H1 (cell line): ENCODE measurements at regions of chr4 and their contacts with region 1.

Region 1: DNA sequence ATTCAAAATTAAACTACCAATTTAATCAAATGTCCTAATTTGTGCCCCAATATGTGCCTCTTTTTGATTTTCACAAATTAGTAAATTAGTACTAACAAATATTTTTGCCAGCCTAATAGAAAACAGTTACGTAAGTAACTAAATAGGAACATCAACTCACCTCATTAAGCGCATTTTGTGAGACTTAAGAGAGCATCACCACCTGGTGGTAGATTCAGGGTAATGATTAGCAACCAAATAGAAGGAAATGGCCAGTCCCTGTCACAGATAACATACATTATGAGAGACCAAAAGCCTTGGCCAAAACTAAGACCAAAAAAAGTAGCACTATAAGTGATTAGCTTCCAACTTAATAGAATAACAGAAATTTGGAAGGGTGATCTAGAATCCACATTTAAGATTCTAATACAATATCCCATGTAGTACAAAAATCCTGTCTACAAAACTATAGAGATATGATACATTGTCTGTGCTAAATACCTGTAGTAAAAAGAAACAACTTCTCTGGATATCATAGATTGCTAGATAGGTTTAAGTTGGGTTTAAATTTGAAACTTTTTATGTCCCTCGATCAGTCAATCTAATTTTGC is 46.7 kb downstream of the C4orf46 start:
- DNase-seq: no peak
- H3K4me3 ChIP-seq: no peak overlapping the region
- H3K27ac ChIP-seq: no peak overlapping the region
- H3K4me1 ChIP-seq: no peaks in the 10 kb centered on the region
- H3K27me3 ChIP-seq: no peaks in the 10 kb centered on the region
- CTCF ChIP-seq: peak in 2 of 3 experiments; percentile 73 to 81; a peak in 3 of 4 replicates
- EP300 ChIP-seq: no peak
- POLR2A ChIP-seq: no peak
- RAD21 ChIP-seq: peak; percentile 95 to 96

Region 2: DNA sequence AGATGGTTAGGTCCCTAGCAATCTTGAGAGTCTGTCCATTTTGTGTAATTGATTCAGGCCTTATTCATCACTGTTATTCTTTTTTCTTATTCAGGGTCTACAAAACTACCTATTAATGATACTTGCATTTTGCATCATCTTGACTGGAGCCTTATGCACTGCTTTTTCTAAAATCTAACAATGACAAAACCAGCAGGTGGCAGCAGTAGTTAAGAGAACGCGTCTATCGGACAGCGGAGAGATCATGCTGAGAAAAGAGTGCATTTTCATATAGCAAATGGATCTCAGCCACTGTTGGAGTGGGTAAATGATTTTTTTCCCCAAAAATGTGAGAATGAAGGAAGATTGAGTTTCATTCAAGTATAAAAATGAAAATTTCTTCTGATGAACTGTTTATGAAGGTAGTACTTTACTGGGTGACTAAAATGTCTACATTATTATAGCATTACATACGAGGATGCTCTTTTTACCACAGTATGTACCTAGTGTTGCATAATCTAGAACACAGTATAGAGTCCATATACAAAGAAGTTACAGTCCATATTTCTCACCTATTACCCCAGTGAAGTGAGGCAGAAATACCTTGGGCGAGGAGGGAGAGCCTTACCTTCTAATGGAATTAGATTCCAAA is 371.5 kb before region 1 on chr4:
- CTCF ChIA-PET with region 1: interaction called, 27 read pairs
- POLR2A ChIA-PET with region 1: no interaction called
- DNase-seq: no peak
- H3K4me3 ChIP-seq: no peak overlapping the region
- H3K27ac ChIP-seq: no peak overlapping the region
- H3K4me1 ChIP-seq: peaks cover 0 to 4% (median 2%) of the 10 kb centered on the region in 4 experiments; a peak in 2 of 7 replicates
- H3K27me3 ChIP-seq: no peaks in the 10 kb centered on the region
- CTCF ChIP-seq: peak in 2 of 3 experiments; percentile 57 to 62; a peak in 3 of 4 replicates
- EP300 ChIP-seq: no peak
- POLR2A ChIP-seq: no peak
- RAD21 ChIP-seq: peak; percentile 71 to 80

Region 3: GRCh38 chr4:158259955-158260575 is 364.9 kb before region 1 on chr4:
- CTCF ChIA-PET with region 1: interaction called, 27 read pairs
- POLR2A ChIA-PET with region 1: no interaction called
- DNase-seq: no peak
- H3K4me3 ChIP-seq: no peak overlapping the region
- H3K27ac ChIP-seq: no peak overlapping the region
- H3K4me1 ChIP-seq: peaks cover 0 to 9% (median 3%) of the 10 kb centered on the region in 4 experiments; a peak in 2 of 7 replicates
- H3K27me3 ChIP-seq: no peaks in the 10 kb centered on the region
- CTCF ChIP-seq: peak in 2 of 3 experiments; percentile 20 to 28; a peak in 2 of 4 replicates
- EP300 ChIP-seq: no peak
- POLR2A ChIP-seq: no peak
- RAD21 ChIP-seq: peak; percentile 54 to 65

Region 4: GRCh38 chr4:158410272-158410671 is 214.7 kb before region 1 on chr4:
- CTCF ChIA-PET with region 1: interaction called, 12 read pairs
- POLR2A ChIA-PET with region 1: no interaction called
- DNase-seq: no peak
- H3K4me3 ChIP-seq: no peak overlapping the region
- H3K27ac ChIP-seq: no peak overlapping the region
- H3K4me1 ChIP-seq: no peaks in the 10 kb centered on the region; a peak in 1 of 7 replicates
- H3K27me3 ChIP-seq: no peaks in the 10 kb centered on the region
- CTCF ChIP-seq: peak in 2 of 3 experiments; percentile 26 to 29; a peak in 2 of 4 replicates
- EP300 ChIP-seq: no peak
- POLR2A ChIP-seq: no peak
- RAD21 ChIP-seq: peak; percentile 55 to 63

Region 5: GRCh38 chr4:158496030-158496741 is 128.8 kb before region 1 on chr4:
- CTCF ChIA-PET with region 1: interaction called, 17 read pairs
- POLR2A ChIA-PET with region 1: no interaction called
- DNase-seq: peak; percentile 25 to 88
- H3K4me3 ChIP-seq: no peak overlapping the region
- H3K27ac ChIP-seq: no peak overlapping the region
- H3K4me1 ChIP-seq: no peaks in the 10 kb centered on the region
- H3K27me3 ChIP-seq: no peaks in the 10 kb centered on the region
- CTCF ChIP-seq: peak; percentile 49 to 83 (median 73)
- EP300 ChIP-seq: no peak
- POLR2A ChIP-seq: no peak
- RAD21 ChIP-seq: peak; percentile 76

Region 6: DNA sequence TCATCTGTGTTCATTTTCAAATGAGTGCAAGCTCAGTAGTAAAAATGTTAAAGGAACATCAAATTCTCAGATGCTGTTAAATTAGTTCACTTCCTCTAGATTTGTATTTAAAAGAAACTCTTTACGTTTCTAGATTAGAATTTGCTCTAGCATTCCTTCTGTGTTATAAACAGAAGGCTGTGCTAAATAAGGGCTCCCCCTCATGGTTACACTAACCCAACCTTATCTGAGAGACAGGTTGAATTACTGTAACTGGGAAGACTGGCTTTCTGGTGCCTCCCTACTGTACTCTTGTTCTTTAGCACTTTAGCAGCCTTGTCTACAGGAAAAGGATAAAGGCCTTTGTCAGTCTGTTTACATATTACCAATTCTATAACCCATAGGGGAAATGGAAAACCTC is 46.5 kb before region 1 on chr4:
- CTCF ChIA-PET with region 1: interaction called, 11 read pairs
- POLR2A ChIA-PET with region 1: no interaction called
- DNase-seq: no peak
- H3K4me3 ChIP-seq: no peak overlapping the region
- H3K27ac ChIP-seq: no peak overlapping the region
- H3K4me1 ChIP-seq: peaks cover 2 to 8% (median 3%) of the 10 kb centered on the region in 4 experiments; a peak in 5 of 7 replicates
- H3K27me3 ChIP-seq: no peaks in the 10 kb centered on the region
- CTCF ChIP-seq: peak in 2 of 3 experiments; percentile 13 to 47; a peak in 2 of 4 replicates
- EP300 ChIP-seq: no peak
- POLR2A ChIP-seq: no peak
- RAD21 ChIP-seq: peak; percentile 43 to 57

Region 7: DNA sequence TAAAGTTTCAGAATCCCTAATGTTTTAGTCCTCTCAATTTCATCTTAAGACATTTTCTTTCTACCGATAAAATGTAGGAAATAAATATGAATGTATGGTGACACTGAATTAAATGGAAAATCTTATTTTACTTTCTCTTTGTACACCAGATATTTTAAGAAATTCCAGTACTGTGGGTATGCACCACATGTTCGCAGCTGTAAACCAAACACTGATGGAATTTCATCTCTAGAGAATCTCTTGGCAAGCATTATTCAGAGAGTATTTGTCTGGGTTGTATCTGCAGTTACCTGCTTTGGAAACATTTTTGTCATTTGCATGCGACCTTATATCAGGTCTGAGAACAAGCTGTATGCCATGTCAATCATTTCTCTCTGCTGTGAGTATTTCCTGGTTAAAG is 19.8 kb after region 1 on chr4:
- CTCF ChIA-PET with region 1: interaction called, 11 read pairs
- POLR2A ChIA-PET with region 1: no interaction called
- DNase-seq: no peak
- H3K4me3 ChIP-seq: no peak overlapping the region
- H3K27ac ChIP-seq: no peak overlapping the region
- H3K4me1 ChIP-seq: no peaks in the 10 kb centered on the region
- H3K27me3 ChIP-seq: no peaks in the 10 kb centered on the region
- CTCF ChIP-seq: no peak
- EP300 ChIP-seq: no peak
- POLR2A ChIP-seq: no peak
- RAD21 ChIP-seq: no peak